Aorta (tissue), 5 donors: ENCODE measurements at regions of chr2 and their contacts with region 1.

Region 1: DNA sequence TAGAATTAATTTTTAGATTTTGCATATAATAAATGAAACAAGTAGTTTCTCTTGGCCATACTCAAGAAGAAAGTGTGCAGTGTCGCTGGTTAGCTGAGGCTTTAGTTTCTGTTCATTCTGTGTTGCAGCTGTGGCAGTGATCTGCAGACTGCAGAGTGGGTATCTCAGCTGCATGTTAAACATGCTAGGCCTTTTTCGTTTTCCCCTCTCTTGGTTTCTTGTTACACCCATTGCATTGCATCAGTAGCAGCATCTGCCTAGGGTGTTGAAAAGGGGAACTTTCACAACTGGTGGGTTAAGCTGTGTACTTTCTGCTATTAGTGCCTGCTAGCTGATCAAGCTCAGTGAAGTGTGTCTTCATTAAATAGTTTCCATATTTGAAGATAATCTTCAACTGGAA is 51.3 kb downstream of the ACSL3 start:
- DNase-seq: no peak
- ATAC-seq: no peak
- H3K4me3 ChIP-seq: no peak overlapping the region
- H3K27ac ChIP-seq: no peak overlapping the region
- H3K4me1 ChIP-seq: peaks cover 5 to 11% of the 10 kb centered on the region in 2 donors
- H3K27me3 ChIP-seq: no peaks in the 10 kb centered on the region

Region 2: DNA sequence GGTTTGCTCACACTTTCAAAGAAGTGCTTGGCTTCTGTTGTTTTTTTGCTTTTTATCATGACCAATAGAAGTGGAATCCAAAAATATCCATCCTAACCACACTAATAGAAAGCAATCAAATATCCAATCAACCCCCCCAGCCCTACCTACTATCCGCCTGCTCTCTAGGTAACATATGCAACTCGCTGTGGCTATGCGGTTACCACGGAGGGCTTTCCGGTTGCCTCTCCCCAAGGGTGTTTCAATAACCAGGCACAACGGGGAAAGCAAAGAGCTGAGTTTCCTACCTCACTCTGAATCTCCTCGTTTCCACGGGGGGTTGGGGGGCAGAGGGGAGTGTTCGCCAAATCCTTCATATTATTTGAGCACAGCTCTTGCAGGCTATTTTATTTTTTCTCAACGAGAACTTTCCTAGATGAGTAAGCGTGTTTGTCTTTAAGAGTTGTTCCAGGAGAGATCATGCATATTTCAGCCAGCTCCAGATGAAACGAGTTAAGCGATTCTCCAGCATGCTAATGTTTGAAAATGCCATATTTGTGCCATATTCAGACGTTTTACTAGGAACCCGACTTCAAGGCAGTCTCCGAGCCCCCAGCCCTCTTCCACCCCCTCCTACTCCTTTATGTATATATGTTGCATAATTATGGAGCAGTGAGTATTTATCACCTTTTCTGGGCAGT is 643.7 kb before region 1 on chr2:
- intact Hi-C with region 1: no loop called
- DNase-seq: no peak
- ATAC-seq: no peak
- H3K4me3 ChIP-seq: no peak overlapping the region
- H3K27ac ChIP-seq: no peak overlapping the region
- H3K4me1 ChIP-seq: no peaks in the 10 kb centered on the region
- H3K27me3 ChIP-seq: no peaks in the 10 kb centered on the region

Region 3: DNA sequence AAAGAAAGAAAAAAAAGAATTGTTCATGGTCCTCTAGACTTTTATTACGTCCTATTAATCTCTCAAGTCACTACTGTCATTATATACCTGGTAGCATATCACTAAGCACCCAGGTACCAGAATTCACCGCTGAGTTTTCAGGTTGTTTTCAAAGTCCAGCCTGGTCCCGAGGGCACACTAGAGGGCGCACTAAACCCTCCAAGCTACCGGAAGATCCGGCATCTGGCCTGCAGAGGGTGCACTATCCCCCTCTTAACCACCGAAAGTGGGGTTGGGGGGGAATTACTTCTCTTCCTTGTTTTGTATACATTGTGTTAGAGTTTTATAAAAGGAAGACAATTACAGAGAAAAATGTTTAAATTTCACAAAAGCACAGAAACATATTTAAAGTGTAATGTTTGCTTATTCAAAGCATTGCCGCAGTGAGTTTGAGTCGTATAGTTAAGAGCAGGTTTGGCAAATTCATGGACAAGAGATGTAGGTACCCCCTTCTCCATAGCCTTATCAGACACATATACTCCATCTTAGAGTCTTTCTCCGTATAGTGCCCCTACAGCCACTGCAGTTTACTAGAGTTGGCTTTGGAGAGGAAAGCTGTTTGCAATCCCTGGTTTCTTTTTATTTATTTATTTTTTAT is 221.4 kb before region 1 on chr2:
- intact Hi-C with region 1: loop called in 1 of 2 experiments (anchors 5 kb)
- DNase-seq: peak; percentile 78 to 91
- ATAC-seq: peak; percentile 90
- H3K4me3 ChIP-seq: peak overlapping the region in 1 of 2 donors; percentile 45
- H3K27ac ChIP-seq: no peak overlapping the region
- H3K4me1 ChIP-seq: peaks cover 2 to 3% of the 10 kb centered on the region in 2 donors
- H3K27me3 ChIP-seq: no peaks in the 10 kb centered on the region

Region 4: DNA sequence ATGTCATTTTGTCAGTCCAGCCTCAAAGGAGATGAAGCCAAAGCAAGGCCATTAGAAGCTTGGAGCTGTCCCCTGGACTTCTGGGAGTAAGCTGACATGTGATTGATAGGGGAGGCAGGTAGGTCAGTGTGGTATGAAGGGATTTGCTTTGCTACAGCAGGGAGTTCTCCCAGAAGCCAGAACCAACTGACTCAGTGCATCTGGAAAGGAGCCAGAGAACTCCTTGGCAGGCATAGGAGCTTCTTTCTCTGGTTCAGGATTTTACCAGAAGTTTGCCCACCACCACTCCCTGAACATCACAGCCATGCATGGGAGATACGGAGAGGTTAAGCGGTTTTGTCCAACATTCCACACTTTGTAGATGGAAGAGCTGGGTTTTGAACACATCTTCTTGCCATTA is 115.3 kb after region 1 on chr2:
- intact Hi-C with region 1: no loop called
- DNase-seq: peak in 1 of 2 donors; percentile 52
- ATAC-seq: no peak
- H3K4me3 ChIP-seq: no peak overlapping the region
- H3K27ac ChIP-seq: no peak overlapping the region
- H3K4me1 ChIP-seq: peaks cover 0 to 3% of the 10 kb centered on the region in 2 donors
- H3K27me3 ChIP-seq: no peaks in the 10 kb centered on the region

Region 5: DNA sequence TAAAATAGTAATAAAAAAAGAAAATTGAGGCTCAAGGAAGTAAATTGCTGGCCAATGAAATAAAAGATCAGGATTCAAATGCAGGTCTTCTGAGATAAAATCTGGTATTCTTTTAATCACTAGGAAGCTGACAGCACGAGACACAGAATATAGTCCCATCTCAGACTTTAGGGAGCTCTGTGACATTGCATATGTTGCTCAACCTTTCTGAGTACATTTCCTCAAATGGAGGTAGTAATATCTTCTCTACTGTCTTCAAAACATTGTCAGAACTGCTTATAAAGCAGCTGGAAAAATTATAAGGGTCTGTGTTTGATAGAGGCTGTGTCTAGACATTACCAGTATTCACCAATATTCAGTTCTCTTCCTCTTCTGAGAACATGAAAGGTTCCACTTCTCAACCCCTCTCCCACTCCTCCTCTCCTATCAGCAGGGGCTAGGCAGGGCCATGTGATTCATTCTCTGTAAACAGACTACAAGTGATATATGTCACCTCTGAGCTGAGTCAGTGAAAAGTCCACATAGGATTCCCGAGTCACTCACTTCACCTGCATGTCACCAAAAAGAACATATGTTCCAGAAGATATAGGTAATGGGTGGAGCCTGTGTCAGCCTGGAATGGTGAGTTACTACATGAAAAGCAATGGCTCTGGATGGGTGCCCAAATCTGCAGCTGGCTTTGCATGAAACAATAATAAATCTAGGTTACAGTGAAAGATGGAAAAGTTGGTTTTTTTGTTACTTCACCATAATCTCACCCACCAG is 147.0 kb after region 1 on chr2:
- intact Hi-C with region 1: no loop called
- DNase-seq: no peak
- ATAC-seq: no peak
- H3K4me3 ChIP-seq: no peak overlapping the region
- H3K27ac ChIP-seq: no peak overlapping the region
- H3K4me1 ChIP-seq: peaks cover 3 to 17% of the 10 kb centered on the region in 2 donors
- H3K27me3 ChIP-seq: no peaks in the 10 kb centered on the region

Region 6: DNA sequence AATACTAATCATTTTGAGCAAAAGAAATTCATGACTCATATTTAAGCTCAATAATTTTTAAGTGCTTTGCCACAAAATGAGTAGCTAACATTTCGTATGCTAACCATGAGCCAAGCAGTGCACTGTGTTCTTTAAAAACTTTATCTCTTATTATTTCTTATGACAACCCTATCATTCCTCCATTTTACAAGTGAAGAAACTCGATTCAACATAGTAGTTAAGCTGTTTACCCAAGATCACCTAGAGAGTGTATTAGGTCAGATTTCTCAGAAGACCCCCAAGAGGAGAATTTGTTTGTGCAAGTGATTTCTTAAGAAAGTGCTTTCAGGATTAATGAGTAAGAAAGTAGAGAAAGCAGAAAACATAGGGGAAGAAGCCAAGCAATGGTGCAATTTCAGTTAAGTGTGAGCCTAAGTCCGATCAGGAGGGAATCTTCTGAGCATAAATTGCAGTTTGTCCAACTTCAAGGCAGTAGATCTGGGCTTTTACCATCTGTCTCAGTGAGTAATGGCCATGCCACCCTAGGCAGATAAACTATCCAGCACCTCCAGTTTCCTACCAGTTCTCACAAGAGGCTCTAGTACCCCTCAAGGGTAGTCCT is 487.3 kb after region 1 on chr2:
- intact Hi-C with region 1: no loop called
- DNase-seq: no peak
- ATAC-seq: peak; percentile 85
- H3K4me3 ChIP-seq: no peak overlapping the region
- H3K27ac ChIP-seq: no peak overlapping the region
- H3K4me1 ChIP-seq: no peaks in the 10 kb centered on the region
- H3K27me3 ChIP-seq: no peaks in the 10 kb centered on the region